Activated CD8-positive, alpha-beta T cell treated with anti-CD3 and anti-CD28 coated beads for 36 hours (primary cell): ENCODE measurements at regions of chr16 and their contacts with region 1.

Region 1: GRCh38 chr16:28277537-28278388 is 14.6 kb upstream of the SBK1 start:
- DNase-seq: peak; percentile 92
- ATAC-seq: peak; percentile 91
- H3K4me3 Mint-ChIP-seq: peak overlapping the region; percentile 29
- H3K27ac Mint-ChIP-seq: peak overlapping the region; percentile 13
- H3K4me1 Mint-ChIP-seq: peaks cover 36% of the 10 kb centered on the region
- H3K27me3 Mint-ChIP-seq: no peaks in the 10 kb centered on the region
- CTCF ChIP-seq: peak; percentile 97

Region 2: DNA sequence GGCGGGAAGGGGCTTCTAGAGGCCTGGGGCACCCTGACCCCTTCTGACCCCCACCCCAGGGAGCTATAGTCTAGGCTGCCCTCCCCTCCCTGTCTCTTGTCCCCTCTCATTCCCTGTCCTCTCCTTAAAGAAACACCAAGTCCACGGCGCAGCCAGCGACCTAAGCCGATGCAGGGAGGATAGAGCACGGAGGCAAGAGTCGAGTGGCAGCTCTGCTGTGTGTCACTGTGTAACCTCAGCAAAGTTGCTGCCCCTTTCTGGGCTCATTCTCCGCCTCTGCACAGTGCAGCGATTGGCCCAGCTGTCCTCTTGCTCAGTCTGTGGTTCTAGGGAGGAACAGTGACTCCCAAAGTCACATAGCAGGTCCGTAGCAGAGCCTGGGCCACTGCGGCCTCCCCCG is 21.9 kb before region 1 on chr16:
- CTCF ChIA-PET with region 1: no interaction called
- POLR2A ChIA-PET with region 1: no interaction called
- intact Hi-C with region 1: no loop called
- DNase-seq: no peak
- ATAC-seq: no peak
- H3K4me3 Mint-ChIP-seq: no peak overlapping the region
- H3K27ac Mint-ChIP-seq: no peak overlapping the region
- H3K4me1 Mint-ChIP-seq: peaks cover 8% of the 10 kb centered on the region
- H3K27me3 Mint-ChIP-seq: no peaks in the 10 kb centered on the region
- CTCF ChIP-seq: no peak

Region 3: DNA sequence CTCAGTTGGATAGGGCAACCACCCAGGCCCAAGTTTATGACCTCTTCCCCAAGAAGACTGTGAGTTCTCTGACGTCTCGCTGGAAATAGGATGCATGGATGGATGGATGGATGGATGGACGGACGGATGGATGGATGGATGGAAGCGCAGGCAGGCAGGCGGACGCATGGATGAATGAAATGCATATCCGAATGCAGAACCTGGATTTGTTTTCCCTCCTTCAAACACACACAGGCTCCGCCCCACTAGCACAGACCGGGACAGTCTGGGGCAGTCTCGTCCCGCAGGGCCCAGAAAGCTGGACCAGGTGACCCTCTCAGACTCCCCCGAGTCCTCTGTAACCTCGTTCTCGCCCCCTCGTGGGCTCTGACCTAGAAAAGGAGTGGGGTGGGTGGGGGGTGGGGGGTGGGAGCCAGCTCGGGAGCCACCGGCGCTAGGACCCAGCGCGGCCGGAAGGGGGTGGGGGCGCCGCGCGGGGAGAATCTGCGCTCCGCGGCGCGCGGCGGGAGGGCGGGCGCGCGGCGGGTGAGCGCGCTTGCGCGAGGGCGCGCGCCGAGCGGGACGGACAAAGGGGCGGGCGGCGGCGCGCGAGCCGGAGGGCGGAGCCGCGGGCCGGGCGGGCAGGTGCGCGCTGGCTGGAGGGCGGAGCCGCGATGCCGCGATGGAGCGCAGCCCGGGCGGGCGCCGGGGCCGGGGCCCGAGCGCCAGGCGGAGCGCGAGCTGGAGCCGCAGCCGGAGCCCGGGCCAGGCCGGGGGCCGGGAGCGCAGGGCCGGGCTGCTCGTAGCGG is 14.3 kb after region 1 on chr16 and contains the start of gene SBK1:
- CTCF ChIA-PET with region 1: interaction called, 29 read pairs
- POLR2A ChIA-PET with region 1: interaction called, 7 read pairs
- intact Hi-C with region 1: no loop called
- DNase-seq: peak; percentile 80
- ATAC-seq: peak; percentile 92
- H3K4me3 Mint-ChIP-seq: peak within 1 kb of the TSS; percentile 87
- H3K27ac Mint-ChIP-seq: peak within 1 kb of the TSS; percentile 78
- H3K4me1 Mint-ChIP-seq: peaks cover 54% of the 10 kb centered on the region
- H3K27me3 Mint-ChIP-seq: no peaks in the 10 kb centered on the region
- CTCF ChIP-seq: no peak
- total RNA-seq, gene SBK1: 35.3 to 35.9 TPM

Region 4: DNA sequence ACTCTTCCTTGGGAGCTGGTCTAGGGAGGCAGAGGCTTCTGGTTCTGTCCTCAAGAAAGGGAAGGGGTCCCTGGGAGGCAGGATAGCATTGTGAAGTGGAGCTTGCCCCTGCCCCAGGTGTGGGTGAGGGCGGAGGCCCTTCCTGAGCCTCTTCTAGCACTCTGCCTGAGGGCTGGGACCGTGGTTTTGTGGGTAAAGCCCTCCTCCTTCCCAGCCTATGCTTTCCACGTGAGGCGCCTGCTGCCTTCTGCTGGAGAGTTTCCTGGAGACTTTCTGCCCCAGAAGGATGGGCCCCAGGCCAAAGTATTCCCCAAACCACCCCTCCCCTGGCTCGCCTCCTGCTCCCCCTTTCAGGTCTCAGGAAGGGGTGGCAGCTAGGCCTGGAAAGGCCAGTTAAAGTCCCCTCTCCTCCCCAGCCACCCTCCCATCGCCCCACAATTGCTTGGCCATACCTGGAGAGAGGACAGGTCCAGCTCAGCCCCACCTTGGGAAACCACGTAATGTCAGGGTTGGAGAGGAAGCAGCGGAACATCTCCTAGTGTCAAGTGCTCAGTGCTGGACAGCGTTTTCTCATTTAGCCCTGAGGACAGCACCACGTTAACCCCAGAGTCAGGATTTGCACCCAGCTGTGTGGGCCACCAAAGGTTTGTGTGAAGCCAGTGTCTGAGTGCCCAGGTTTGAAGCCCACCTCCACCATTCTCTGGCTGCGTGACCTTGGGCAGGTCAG is 20.2 kb after region 1 on chr16:
- CTCF ChIA-PET with region 1: interaction called, 29 read pairs
- POLR2A ChIA-PET with region 1: interaction called, 4 read pairs
- intact Hi-C with region 1: no loop called
- DNase-seq: peak; percentile 34
- ATAC-seq: peak; percentile 25
- H3K4me3 Mint-ChIP-seq: peak overlapping the region; percentile 42
- H3K27ac Mint-ChIP-seq: peak overlapping the region; percentile 77
- H3K4me1 Mint-ChIP-seq: peaks cover 70% of the 10 kb centered on the region
- H3K27me3 Mint-ChIP-seq: no peaks in the 10 kb centered on the region
- CTCF ChIP-seq: no peak

Region 5: DNA sequence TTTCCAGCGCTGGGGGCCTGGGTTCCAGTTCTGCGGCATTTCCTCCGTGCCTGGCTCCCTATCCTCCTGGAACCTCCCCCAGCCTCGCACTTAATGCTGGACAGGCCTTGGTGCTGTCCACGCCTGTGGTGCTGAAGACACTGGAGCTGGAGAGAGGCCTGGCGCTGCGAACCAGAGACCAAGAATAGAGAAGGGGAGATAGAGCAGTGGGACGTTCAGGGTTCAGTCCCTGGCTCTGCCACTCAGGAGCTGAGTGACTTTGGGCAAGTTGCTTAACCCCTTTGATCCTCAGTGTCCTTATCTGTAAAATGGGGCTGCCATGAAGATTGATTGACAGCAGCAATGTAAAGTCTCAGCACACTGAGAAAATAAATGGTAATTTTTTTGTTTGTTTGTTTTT is 26.5 kb after region 1 on chr16:
- CTCF ChIA-PET with region 1: interaction called, 29 read pairs
- POLR2A ChIA-PET with region 1: interaction called, 4 read pairs
- intact Hi-C with region 1: no loop called
- DNase-seq: peak; percentile 38
- ATAC-seq: no peak
- H3K4me3 Mint-ChIP-seq: no peak overlapping the region
- H3K27ac Mint-ChIP-seq: no peak overlapping the region
- H3K4me1 Mint-ChIP-seq: peaks cover 48% of the 10 kb centered on the region
- H3K27me3 Mint-ChIP-seq: no peaks in the 10 kb centered on the region
- CTCF ChIP-seq: no peak

Region 6: DNA sequence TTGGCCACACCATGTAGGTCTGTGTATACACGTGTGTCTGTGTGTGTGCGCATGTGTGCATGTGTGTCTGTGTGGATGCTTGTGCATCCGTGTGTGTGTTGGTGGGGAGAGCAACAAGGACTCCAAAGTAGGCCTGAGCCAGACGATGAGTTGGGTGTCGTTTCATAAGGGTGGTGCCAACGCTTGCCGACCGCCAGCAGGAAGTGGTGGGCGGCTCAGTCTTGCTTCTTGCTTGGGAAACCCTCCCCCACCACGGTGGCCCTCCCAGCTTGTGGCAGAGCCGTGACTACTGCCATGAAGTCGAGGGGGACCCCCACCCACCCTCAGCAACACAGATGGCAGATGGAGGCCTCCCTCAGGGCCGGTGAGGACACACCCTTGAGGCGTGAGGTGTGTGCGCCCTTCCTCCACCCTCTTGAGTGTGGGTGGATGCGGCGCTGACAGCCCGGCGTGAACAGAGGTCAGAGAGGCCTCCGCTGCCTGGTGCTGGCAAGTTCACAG is 32.1 kb after region 1 on chr16:
- CTCF ChIA-PET with region 1: interaction called, 259 read pairs
- POLR2A ChIA-PET with region 1: interaction called, 3 read pairs
- intact Hi-C with region 1: no loop called
- DNase-seq: peak; percentile 99
- ATAC-seq: peak; percentile 94
- H3K4me3 Mint-ChIP-seq: peak overlapping the region; percentile 55
- H3K27ac Mint-ChIP-seq: peak overlapping the region; percentile 96
- H3K4me1 Mint-ChIP-seq: peaks cover 67% of the 10 kb centered on the region
- H3K27me3 Mint-ChIP-seq: no peaks in the 10 kb centered on the region
- CTCF ChIP-seq: no peak

Region 7: DNA sequence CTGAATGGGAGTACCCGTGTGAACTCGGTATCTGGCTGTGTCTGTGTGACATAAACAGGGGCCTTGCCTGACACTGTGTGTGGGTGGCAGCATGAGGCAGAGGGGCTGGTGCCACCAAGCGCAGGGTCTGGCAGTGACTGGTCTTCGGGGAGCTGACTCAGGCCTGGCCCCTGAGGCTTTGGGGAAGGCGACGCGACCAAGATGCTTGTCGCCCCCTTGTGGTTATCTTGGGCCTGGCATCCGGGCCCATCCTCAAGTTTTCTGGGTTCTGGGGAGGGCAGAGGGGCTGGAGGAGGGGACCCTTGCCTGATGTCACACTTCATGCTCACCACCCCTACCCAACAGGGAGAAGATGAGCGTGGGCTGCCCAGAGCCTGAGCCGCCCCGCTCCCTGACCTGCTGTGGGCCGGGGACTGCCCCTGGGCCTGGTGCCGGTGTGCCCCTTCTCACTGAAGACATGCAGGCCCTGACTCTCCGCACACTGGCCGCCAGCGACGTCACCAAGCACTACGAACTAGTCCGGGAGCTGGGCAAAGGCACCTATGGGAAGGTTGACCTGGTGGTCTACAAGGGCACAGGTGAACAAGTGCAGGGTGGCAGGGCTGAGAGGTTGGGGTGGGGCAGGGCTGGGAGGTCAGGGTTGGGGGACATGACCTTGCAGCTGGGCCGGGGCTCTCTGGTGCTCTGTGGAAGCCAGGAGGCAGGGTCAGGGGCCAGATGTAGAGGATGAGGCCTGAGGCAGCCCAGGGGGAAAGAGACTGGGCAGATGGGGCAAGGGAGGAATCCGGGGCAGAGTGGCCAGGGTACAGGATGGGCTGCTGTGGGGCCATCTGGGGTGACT is 39.5 kb after region 1 on chr16:
- CTCF ChIA-PET with region 1: interaction called, 259 read pairs
- POLR2A ChIA-PET with region 1: interaction called, 5 read pairs
- intact Hi-C with region 1: loop called (anchors 2 kb)
- DNase-seq: peak; percentile 91
- ATAC-seq: peak; percentile 91
- H3K4me3 Mint-ChIP-seq: no peak overlapping the region
- H3K27ac Mint-ChIP-seq: peak overlapping the region; percentile 72
- H3K4me1 Mint-ChIP-seq: peaks cover 39% of the 10 kb centered on the region
- H3K27me3 Mint-ChIP-seq: no peaks in the 10 kb centered on the region
- CTCF ChIP-seq: peak; percentile 88

Region 8: GRCh38 chr16:28326944-28327610 is 49.3 kb after region 1 on chr16:
- CTCF ChIA-PET with region 1: interaction called, 259 read pairs
- POLR2A ChIA-PET with region 1: no interaction called
- intact Hi-C with region 1: no loop called
- DNase-seq: peak; percentile 84
- ATAC-seq: peak; percentile 82
- H3K4me3 Mint-ChIP-seq: no peak overlapping the region
- H3K27ac Mint-ChIP-seq: no peak overlapping the region
- H3K4me1 Mint-ChIP-seq: peaks cover 9% of the 10 kb centered on the region
- H3K27me3 Mint-ChIP-seq: no peaks in the 10 kb centered on the region
- CTCF ChIP-seq: peak; percentile 85